GM12878 (cell line): ENCODE measurements at regions of chr15 and their contacts with region 1.

Region 1: DNA sequence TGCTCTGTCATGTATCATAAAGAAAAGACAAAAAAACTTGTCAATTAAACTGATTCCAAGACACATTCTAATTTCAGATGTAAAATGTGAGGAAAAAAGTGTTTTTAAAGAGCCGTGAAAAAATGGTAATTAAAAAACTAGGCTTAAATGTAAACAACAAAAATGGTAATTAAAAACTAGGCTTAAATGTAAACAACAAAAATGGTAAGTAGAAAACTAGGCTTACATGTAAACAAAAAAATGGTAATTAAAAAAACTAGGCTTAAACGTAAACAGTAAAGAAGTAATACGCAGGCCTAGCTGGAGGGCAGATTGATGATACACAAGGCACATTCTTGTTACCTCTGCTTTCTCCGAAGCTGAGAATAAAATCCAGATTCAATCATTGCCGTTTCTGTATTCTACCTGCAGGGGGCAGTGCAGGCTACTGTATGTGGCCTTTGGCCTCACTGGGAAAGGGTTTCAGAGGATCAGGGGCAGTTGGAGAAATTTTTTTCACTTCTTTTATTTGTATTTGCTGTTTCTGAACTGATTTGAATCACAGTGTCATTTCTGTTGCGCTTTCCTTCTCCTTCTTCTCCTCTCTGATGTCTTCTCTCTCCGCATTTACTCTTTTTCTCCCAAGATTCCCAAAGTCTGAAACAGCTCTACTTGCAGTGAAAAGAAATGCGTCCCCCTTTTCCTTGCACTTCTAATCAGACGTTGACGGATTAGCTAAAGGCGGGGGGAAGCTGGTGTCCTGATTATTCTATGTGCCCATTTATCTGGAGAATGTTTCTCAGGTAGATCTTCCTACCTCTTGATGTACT is 67.2 kb upstream of the MCTP2 start:
- DNase-seq: no peak
- ATAC-seq: peak; percentile 82
- H3K4me3 ChIP-seq: no peak overlapping the region
- H3K27ac ChIP-seq: no peak overlapping the region
- H3K4me1 ChIP-seq: no peaks in the 10 kb centered on the region
- H3K27me3 ChIP-seq: no peaks in the 10 kb centered on the region
- CTCF ChIP-seq: peak; percentile 69 to 83 (median 80)
- EP300 ChIP-seq: no peak
- POLR2A ChIP-seq: no peak
- RAD21 ChIP-seq: peak; percentile 97

Region 2: GRCh38 chr15:93803421-93804153 is 360.6 kb before region 1 on chr15:
- CTCF ChIA-PET with region 1: no interaction called
- POLR2A ChIA-PET with region 1: no interaction called
- RAD21 ChIA-PET with region 1: no interaction called
- SMC1A ChIA-PET with region 1: no interaction called
- in situ Hi-C with region 1: no loop called
- intact Hi-C with region 1: no loop called
- DNase-seq: no peak
- ATAC-seq: no peak
- H3K4me3 ChIP-seq: no peak overlapping the region
- H3K27ac ChIP-seq: no peak overlapping the region
- H3K4me1 ChIP-seq: no peaks in the 10 kb centered on the region
- H3K27me3 ChIP-seq: no peaks in the 10 kb centered on the region
- CTCF ChIP-seq: no peak
- EP300 ChIP-seq: no peak
- POLR2A ChIP-seq: no peak
- RAD21 ChIP-seq: no peak

Region 3: GRCh38 chr15:94145046-94145445 is 19.2 kb before region 1 on chr15:
- CTCF ChIA-PET with region 1: interaction called, 14 read pairs
- POLR2A ChIA-PET with region 1: no interaction called
- RAD21 ChIA-PET with region 1: interaction called, 5 read pairs
- SMC1A ChIA-PET with region 1: no interaction called
- in situ Hi-C with region 1: no loop called
- intact Hi-C with region 1: no loop called
- DNase-seq: no peak
- ATAC-seq: no peak
- H3K4me3 ChIP-seq: no peak overlapping the region
- H3K27ac ChIP-seq: no peak overlapping the region
- H3K4me1 ChIP-seq: no peaks in the 10 kb centered on the region
- H3K27me3 ChIP-seq: no peaks in the 10 kb centered on the region
- CTCF ChIP-seq: no peak
- EP300 ChIP-seq: no peak
- POLR2A ChIP-seq: no peak
- RAD21 ChIP-seq: no peak

Region 4: GRCh38 chr15:94230956-94231722 is 66.9 kb after region 1 on chr15 and contains the start of gene MCTP2:
- CTCF ChIA-PET with region 1: interaction called, 30 read pairs
- POLR2A ChIA-PET with region 1: no interaction called
- RAD21 ChIA-PET with region 1: interaction called, 18 read pairs
- SMC1A ChIA-PET with region 1: interaction called, 45 read pairs
- in situ Hi-C with region 1: no loop called
- intact Hi-C with region 1: loop called (anchors 2 kb)
- DNase-seq: peak; percentile 57
- ATAC-seq: peak; percentile 87
- H3K4me3 ChIP-seq: peak within 1 kb of the TSS; percentile 61
- H3K27ac ChIP-seq: no peak within 1 kb of the TSS
- H3K4me1 ChIP-seq: peaks cover 16% of the 10 kb centered on the region
- H3K27me3 ChIP-seq: peaks cover 0 to 7% of the 10 kb centered on the region in 2 experiments; a peak in 2 of 4 replicates
- CTCF ChIP-seq: peak in 2 of 3 experiments; percentile 4 to 33; a peak in 2 of 6 replicates
- EP300 ChIP-seq: no peak
- POLR2A ChIP-seq: peak; percentile 52; the same call in 1 of the 2 replicates
- RAD21 ChIP-seq: no peak
- polyA plus RNA-seq, gene MCTP2: 0.24 to 0.26 TPM

Region 5: DNA sequence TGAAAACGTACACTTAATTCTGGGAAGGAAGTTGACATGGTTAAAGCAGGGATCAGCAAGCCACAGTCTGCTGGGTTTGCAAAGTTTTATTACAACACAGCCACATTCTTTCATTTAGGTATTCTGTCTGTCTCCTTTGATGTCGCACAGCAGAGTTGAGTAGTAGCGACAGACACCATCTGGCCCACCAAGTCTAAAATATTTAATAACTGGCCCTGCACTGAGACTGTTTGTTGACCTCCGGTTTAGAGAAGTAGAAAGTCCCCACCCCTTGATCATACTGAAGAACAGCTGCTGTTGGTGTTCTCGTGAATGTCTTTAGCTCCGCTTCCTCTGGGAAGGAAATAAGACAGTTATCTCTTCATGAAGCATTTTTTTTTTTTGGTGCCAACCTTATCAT is 133.4 kb after region 1 on chr15:
- CTCF ChIA-PET with region 1: interaction called, 10 read pairs
- POLR2A ChIA-PET with region 1: no interaction called
- RAD21 ChIA-PET with region 1: interaction called, 9 read pairs
- SMC1A ChIA-PET with region 1: interaction called, 6 read pairs
- in situ Hi-C with region 1: no loop called
- intact Hi-C with region 1: no loop called
- DNase-seq: no peak
- ATAC-seq: peak; percentile 80
- H3K4me3 ChIP-seq: no peak overlapping the region
- H3K27ac ChIP-seq: no peak overlapping the region
- H3K4me1 ChIP-seq: no peaks in the 10 kb centered on the region
- H3K27me3 ChIP-seq: no peaks in the 10 kb centered on the region
- CTCF ChIP-seq: no peak
- EP300 ChIP-seq: no peak
- POLR2A ChIP-seq: no peak
- RAD21 ChIP-seq: no peak

Region 6: DNA sequence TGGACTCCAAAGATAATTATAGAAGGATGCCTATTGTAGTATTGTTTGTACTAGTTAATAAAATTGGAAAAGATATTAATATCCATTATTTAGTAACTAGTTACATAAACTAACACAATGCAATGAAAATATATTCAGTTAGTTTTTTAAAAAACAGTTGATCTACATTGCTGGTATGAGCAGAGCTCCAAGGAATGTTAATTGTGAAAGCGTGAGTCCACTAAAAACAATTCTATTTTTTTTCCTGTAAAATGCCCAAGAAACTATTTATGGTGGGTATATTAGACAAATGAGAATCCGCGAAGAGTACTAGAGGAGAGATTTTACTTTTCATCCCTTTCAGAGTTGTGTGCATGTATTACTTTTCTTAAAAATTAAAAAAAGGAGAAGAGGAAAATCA is 171.4 kb after region 1 on chr15:
- CTCF ChIA-PET with region 1: interaction called, 50 read pairs
- POLR2A ChIA-PET with region 1: no interaction called
- RAD21 ChIA-PET with region 1: interaction called, 30 read pairs
- SMC1A ChIA-PET with region 1: interaction called, 38 read pairs
- in situ Hi-C with region 1: no loop called
- intact Hi-C with region 1: no loop called
- DNase-seq: no peak
- ATAC-seq: no peak
- H3K4me3 ChIP-seq: no peak overlapping the region
- H3K27ac ChIP-seq: no peak overlapping the region
- H3K4me1 ChIP-seq: no peaks in the 10 kb centered on the region
- H3K27me3 ChIP-seq: no peaks in the 10 kb centered on the region
- CTCF ChIP-seq: no peak
- EP300 ChIP-seq: no peak
- POLR2A ChIP-seq: no peak
- RAD21 ChIP-seq: no peak

Region 7: DNA sequence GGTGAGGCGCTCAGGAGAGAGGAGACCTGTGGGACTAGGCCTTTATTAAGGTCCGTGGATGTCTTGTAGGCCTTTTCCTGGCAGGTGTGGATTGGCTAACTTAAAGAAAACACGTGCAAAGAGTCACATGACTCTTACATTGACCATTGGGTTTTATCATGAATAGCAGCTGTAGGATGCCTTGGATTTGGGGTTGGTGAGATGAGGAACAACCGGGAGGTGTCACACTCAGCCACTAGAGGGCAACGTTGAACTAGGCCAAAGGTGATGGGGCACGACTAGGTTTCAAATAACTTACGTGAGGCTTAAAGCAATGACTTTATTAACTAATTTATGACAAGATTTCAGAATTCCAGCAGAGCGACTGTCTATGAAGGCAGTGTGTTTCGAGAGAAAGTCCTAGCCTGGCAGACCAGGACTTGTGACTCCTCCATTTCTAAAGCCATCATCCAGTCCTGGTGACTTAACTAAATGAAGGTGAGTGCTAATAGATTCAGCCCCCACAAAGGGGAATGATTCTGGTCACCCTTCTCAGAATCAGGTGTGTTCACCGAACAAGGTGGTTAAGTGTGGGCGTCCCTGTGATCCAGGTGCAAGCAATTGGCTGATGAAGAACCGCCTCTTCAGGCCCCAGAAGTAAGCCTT is 412.8 kb after region 1 on chr15:
- CTCF ChIA-PET with region 1: interaction called, 3 read pairs
- POLR2A ChIA-PET with region 1: no interaction called
- RAD21 ChIA-PET with region 1: interaction called, 9 read pairs
- SMC1A ChIA-PET with region 1: no interaction called
- in situ Hi-C with region 1: no loop called
- intact Hi-C with region 1: loop called (anchors 10 kb)
- DNase-seq: no peak
- ATAC-seq: peak; percentile 94
- H3K4me3 ChIP-seq: no peak overlapping the region
- H3K27ac ChIP-seq: no peak overlapping the region
- H3K4me1 ChIP-seq: no peaks in the 10 kb centered on the region
- H3K27me3 ChIP-seq: no peaks in the 10 kb centered on the region; a peak in 2 of 4 replicates
- CTCF ChIP-seq: peak; percentile 75 to 84 (median 77)
- EP300 ChIP-seq: no peak
- POLR2A ChIP-seq: no peak
- RAD21 ChIP-seq: peak; percentile 62